ENCODE measurements at regions of chr7 and their contacts with region 1.

Region 1: GRCh38 chr7:87219545-87220025 is at the start of gene TMEM243:
- DNase-seq: peak; percentile 91
- ATAC-seq: peak; percentile 47
- H3K4me3 Mint-ChIP-seq: peak within 1 kb of the TSS; percentile 97
- H3K27ac Mint-ChIP-seq: peak within 1 kb of the TSS; percentile 98
- H3K4me1 Mint-ChIP-seq: peaks cover 33% of the 10 kb centered on the region
- H3K27me3 Mint-ChIP-seq: peaks cover 3% of the 10 kb centered on the region
- total RNA-seq, gene TMEM243: 44.1 to 46.9 TPM

Region 2: DNA sequence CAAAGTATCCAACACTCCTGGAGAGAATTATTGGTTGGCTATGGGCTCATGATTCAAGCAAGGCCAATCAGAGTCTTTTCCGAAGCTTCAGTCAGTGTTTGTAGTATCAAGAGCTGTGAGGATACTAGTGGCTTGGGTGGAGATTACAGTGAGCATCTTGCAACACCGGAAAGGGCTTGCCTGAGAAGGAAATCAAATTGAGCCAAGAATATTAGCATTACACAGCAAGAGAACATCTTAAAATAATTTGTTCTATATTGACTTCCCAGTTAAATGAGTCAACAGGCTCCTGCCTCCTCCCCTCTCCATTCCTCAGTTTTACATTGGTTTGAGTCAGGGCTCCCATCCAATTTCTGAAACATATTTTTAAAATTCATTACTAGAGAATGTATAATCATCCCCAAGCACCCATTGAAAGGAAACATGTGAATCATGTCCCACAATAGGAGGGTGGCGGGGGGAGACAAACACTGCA is 287.5 kb before region 1 on chr7:
- CTCF ChIA-PET with region 1: no interaction called
- POLR2A ChIA-PET with region 1: no interaction called
- intact Hi-C with region 1: loop called in 1 of 2 experiments (anchors 5 kb)
- DNase-seq: peak; percentile 32
- ATAC-seq: peak; percentile 52
- H3K4me3 Mint-ChIP-seq: no peak overlapping the region
- H3K27ac Mint-ChIP-seq: peak overlapping the region; percentile 44
- H3K4me1 Mint-ChIP-seq: peaks cover 13% of the 10 kb centered on the region
- H3K27me3 Mint-ChIP-seq: peaks cover 5% of the 10 kb centered on the region

Region 3: GRCh38 chr7:86978808-86979506 is 240.6 kb before region 1 on chr7:
- CTCF ChIA-PET with region 1: interaction called, 3 read pairs
- POLR2A ChIA-PET with region 1: no interaction called
- intact Hi-C with region 1: loop called in 1 of 2 experiments (anchors 2 kb)
- DNase-seq: no peak
- ATAC-seq: peak; percentile 92
- H3K4me3 Mint-ChIP-seq: no peak overlapping the region
- H3K27ac Mint-ChIP-seq: peak overlapping the region; percentile 40
- H3K4me1 Mint-ChIP-seq: peaks cover 42% of the 10 kb centered on the region
- H3K27me3 Mint-ChIP-seq: no peaks in the 10 kb centered on the region

Region 4: GRCh38 chr7:87206361-87206760 is 13.2 kb before region 1 on chr7:
- CTCF ChIA-PET with region 1: interaction called, 4 read pairs
- POLR2A ChIA-PET with region 1: interaction called, 4 read pairs
- intact Hi-C with region 1: loop called in 1 of 2 experiments (anchors 1 kb)
- DNase-seq: no peak
- ATAC-seq: no peak
- H3K4me3 Mint-ChIP-seq: no peak overlapping the region
- H3K27ac Mint-ChIP-seq: no peak overlapping the region
- H3K4me1 Mint-ChIP-seq: peaks cover 68% of the 10 kb centered on the region
- H3K27me3 Mint-ChIP-seq: no peaks in the 10 kb centered on the region

Region 5: DNA sequence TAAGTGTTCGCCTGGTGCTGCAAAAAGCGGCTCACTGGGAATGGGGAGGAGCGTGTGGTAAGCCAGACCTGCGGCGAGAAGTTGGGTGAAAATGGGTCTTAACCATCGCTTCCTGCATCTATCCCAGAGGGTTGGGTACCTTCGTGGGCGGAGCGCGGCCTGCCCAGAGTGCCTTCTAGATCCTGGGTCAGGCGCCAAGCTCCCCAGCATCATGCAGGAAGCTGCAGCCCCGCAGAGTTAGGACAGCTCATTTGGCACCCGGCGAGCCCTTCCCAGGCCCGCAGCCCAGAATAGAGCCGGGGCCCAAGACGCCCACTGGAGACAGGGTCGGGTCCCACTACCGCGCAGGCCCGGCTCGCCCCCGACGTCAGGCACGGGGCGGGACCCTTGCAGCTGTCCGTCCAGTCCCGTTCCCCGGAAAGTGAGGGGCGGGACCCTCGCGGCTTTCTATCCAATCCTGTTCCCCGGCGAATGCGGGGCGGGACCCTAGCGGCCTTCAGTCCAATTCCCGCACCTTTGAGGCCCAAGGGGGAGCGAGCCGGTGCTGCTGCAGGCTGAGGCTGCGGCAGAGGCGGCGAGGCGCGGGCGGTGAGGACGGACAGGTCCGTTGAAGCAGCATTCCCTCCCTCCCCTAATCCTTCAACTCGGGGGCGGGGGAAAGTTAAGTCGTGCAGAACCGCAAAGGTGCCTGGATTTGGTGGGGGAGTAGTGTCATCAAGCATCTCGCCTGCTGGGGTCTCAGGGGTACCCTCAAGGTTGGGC is 125.8 kb after region 1 on chr7 and contains the start of gene CROT:
- CTCF ChIA-PET with region 1: interaction called, 3 read pairs
- POLR2A ChIA-PET with region 1: interaction called, 4 read pairs
- intact Hi-C with region 1: loop called (anchors 1 kb)
- DNase-seq: peak; percentile 97
- ATAC-seq: peak; percentile 98
- H3K4me3 Mint-ChIP-seq: peak within 1 kb of the TSS; percentile 94
- H3K27ac Mint-ChIP-seq: peak within 1 kb of the TSS; percentile 95
- H3K4me1 Mint-ChIP-seq: peaks cover 45% of the 10 kb centered on the region
- H3K27me3 Mint-ChIP-seq: no peaks in the 10 kb centered on the region
- total RNA-seq, gene CROT: 4.6 to 7.0 TPM

Measured in activated CD4-positive, alpha-beta T cell treated with anti-CD3 and anti-CD28 coated beads for 36 hours (primary cell).